ENCODE measurements at regions of chr2 and their contacts with region 1.

Region 1: DNA sequence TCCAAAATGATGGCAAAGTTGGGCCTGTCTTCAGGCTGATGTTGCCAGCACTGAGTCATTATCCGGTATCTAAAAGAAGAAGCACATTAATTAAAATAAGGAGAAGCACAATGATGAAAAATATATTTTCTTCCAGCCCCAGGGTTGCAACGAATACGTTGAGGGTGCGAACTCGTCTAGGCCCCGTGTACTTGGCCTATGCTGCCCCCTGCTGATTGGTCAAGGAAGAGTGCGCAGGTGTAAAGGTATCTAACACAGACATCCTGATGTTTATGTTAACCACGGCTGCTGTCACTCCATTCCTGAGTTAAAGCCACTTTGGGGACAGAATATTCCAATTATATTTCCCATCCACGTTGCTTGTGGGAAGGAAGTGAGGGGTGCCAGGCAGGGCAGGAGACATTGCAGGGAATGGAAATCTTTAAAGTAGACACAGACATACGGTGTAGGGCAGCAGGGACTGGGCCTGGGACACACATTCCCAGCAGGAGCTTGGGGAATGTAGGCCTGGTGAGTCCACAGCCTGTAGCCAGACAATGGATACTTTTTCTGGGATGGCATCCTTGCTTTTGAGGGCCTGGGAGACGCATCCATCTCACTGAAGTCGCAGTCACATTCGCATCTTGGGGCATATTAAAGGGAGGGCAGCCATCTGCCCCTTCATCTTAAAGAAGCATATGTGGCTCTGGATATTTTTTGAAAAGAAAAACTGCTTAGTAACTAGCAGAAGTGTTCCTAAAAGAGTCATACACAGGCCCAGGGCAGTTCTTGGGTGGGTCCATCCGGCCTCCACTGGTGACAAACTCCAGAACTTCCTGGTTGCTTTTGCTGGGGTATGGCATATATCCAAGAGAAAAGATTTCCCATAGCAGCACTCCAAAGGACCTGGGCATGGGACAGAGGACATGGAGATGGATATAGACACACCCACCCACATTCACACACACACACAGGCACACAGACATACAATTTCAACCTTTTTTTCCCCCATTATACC is 81.9 kb downstream of the CLIP4 start:
- DNase-seq: peak; percentile 66
- H3K4me3 ChIP-seq: no peak overlapping the region
- H3K27ac ChIP-seq: no peak overlapping the region
- H3K4me1 ChIP-seq: no peaks in the 10 kb centered on the region
- CTCF ChIP-seq: peak; percentile 93

Region 2: GRCh38 chr2:28796620-28797019 is 400.5 kb before region 1 on chr2:
- CTCF ChIA-PET with region 1: no interaction called
- POLR2A ChIA-PET with region 1: no interaction called
- intact Hi-C with region 1: no loop called
- DNase-seq: no peak
- H3K4me3 ChIP-seq: no peak overlapping the region
- H3K27ac ChIP-seq: no peak overlapping the region
- H3K4me1 ChIP-seq: no peaks in the 10 kb centered on the region
- CTCF ChIP-seq: no peak

Region 3: DNA sequence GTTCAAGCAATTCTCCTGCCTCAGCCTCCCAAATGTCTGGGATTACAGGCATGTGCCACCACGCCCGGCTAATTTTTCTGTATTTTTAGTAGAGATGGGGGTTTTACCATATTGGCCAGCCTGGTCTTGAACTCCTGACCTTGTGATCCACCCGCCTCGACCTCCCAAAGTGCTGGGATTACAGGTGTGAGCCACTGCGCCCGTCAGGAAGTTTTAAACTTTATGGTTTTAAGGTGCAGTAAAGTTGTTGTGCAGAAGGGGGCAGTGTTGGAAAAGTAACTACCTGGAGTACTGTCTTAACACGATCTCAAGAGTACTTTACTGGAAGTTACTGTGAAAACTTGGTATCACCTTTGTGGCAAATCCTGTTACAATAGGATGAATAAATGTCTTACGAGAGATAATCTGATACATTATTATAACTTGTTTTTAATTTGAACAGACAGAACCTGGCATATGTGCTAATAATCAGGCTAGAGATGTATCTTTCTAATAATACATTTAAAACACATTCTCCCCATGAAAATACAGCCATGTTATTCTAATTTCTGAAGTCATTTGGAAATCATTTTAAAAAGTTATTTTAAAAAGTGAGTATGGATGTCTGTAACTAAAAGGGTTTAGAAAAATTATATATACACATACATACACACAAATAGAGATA is 375.7 kb before region 1 on chr2:
- CTCF ChIA-PET with region 1: interaction called, 3 read pairs
- POLR2A ChIA-PET with region 1: no interaction called
- intact Hi-C with region 1: loop called (anchors 1 kb)
- DNase-seq: peak; percentile 65
- H3K4me3 ChIP-seq: no peak overlapping the region
- H3K27ac ChIP-seq: no peak overlapping the region
- H3K4me1 ChIP-seq: no peaks in the 10 kb centered on the region
- CTCF ChIP-seq: peak; percentile 79

Region 4: GRCh38 chr2:28958689-28959088 is 238.4 kb before region 1 on chr2:
- CTCF ChIA-PET with region 1: no interaction called
- POLR2A ChIA-PET with region 1: no interaction called
- intact Hi-C with region 1: loop called (anchors 1 kb)
- DNase-seq: peak; percentile 63
- H3K4me3 ChIP-seq: no peak overlapping the region
- H3K27ac ChIP-seq: no peak overlapping the region
- H3K4me1 ChIP-seq: no peaks in the 10 kb centered on the region
- CTCF ChIP-seq: peak; percentile 82

Region 5: DNA sequence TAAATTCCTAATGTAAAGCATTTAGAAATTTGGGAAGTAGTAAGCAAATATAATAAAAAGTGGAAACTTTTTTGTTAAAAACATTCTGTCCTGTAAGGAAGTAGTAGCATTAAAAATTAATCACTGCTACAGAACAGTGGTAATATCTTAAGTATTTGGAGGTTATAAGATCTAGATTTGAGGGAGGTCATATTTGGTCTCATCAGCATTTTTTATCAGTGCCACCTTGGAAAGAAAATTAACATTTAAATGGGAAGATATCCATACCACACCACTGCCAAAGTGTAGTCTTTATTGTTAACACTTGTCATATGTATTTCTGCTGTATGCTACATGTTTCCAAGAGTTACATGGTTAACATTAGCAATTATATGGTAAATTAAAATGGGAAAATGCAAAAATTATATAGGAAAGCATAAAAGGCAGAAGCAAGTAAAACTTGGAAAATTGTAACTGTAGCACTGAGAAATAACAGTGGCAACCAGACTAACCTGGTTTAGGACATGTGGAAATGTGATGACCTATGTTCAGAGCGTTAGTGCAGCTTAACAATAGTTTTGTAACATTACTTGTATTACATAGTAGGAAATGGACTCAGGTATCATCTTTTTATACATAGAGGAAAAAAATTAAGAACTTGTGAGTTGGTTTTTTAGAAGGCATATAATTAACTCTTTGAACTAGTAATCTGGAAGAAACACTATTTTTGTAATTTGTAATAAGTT is 34.7 kb before region 1 on chr2:
- CTCF ChIA-PET with region 1: no interaction called
- POLR2A ChIA-PET with region 1: no interaction called
- intact Hi-C with region 1: loop called (anchors 2 kb)
- DNase-seq: no peak
- H3K4me3 ChIP-seq: no peak overlapping the region
- H3K27ac ChIP-seq: no peak overlapping the region
- H3K4me1 ChIP-seq: no peaks in the 10 kb centered on the region
- CTCF ChIP-seq: no peak

Measured in OCI-LY7 (cell line).